ENCODE measurements at regions of chr12 and their contacts with region 1.

Region 1: DNA sequence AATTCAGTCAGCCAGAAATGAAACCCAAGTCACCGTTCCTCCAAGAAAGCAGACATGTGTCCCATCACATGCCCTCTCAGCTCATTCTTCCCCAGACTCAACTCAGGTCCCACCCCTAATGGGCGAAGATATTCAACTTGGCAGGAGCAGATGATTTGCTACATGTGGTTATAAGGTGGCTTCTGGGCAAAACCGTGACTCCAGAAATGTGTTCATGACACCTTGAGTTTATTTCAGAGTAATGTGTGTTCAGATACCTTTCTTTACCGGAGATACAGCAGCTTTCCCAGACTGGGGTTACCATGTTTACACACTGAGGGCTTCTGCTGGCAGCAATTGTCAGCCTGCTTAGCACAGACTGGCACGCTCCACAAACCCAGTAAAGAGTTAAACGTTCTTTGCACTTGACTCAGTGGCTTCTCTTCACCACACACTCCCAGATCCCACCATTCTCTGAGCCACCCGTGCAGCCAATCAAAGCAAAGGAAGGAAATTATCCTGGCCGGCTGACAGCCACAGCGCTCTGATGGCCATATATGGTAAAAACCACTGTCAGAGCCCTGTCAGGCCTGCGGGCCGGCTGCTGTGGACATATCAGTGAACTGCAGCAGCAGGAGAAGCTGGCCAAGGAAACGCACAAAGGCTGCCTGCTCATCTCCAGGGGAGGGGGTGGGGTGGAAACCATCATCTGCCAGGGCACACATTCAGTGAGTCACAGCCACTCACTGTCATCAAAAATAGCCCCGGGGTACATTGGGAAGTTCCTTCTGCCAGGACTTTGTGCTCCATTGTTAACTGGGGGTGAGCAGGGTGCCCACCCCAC is 39.9 kb downstream of the CORO1C start:
- DNase-seq: peak; percentile 81
- ATAC-seq: peak; percentile 97
- H3K4me3 Mint-ChIP-seq: no peak overlapping the region
- H3K27ac Mint-ChIP-seq: peak overlapping the region; percentile 93
- H3K4me1 Mint-ChIP-seq: peaks cover 43% of the 10 kb centered on the region
- H3K27me3 Mint-ChIP-seq: no peaks in the 10 kb centered on the region
- CTCF ChIP-seq: no peak

Region 2: GRCh38 chr12:108731105-108731865 is 39.9 kb after region 1 on chr12 and contains the start of gene CORO1C:
- CTCF ChIA-PET with region 1: interaction called, 9 read pairs
- POLR2A ChIA-PET with region 1: interaction called, 16 read pairs
- DNase-seq: peak; percentile 98
- ATAC-seq: peak; percentile 72
- H3K4me3 Mint-ChIP-seq: peak within 1 kb of the TSS; percentile 91
- H3K27ac Mint-ChIP-seq: peak within 1 kb of the TSS; percentile 98
- H3K4me1 Mint-ChIP-seq: peaks cover 43% of the 10 kb centered on the region
- H3K27me3 Mint-ChIP-seq: no peaks in the 10 kb centered on the region
- CTCF ChIP-seq: peak; percentile 72
- total RNA-seq, gene CORO1C: 108 to 114 TPM (median 113 TPM) in 3 replicates

Region 3: GRCh38 chr12:108821407-108822397 is 130.3 kb after region 1 on chr12:
- CTCF ChIA-PET with region 1: no interaction called
- POLR2A ChIA-PET with region 1: no interaction called
- DNase-seq: no peak
- ATAC-seq: no peak
- H3K4me3 Mint-ChIP-seq: no peak overlapping the region
- H3K27ac Mint-ChIP-seq: no peak overlapping the region
- H3K4me1 Mint-ChIP-seq: peaks cover 22% of the 10 kb centered on the region
- H3K27me3 Mint-ChIP-seq: no peaks in the 10 kb centered on the region
- CTCF ChIP-seq: no peak

Measured in WTC11 (cell line).